ENCODE measurements at regions of chr12 and their contacts with region 1.

Region 1: DNA sequence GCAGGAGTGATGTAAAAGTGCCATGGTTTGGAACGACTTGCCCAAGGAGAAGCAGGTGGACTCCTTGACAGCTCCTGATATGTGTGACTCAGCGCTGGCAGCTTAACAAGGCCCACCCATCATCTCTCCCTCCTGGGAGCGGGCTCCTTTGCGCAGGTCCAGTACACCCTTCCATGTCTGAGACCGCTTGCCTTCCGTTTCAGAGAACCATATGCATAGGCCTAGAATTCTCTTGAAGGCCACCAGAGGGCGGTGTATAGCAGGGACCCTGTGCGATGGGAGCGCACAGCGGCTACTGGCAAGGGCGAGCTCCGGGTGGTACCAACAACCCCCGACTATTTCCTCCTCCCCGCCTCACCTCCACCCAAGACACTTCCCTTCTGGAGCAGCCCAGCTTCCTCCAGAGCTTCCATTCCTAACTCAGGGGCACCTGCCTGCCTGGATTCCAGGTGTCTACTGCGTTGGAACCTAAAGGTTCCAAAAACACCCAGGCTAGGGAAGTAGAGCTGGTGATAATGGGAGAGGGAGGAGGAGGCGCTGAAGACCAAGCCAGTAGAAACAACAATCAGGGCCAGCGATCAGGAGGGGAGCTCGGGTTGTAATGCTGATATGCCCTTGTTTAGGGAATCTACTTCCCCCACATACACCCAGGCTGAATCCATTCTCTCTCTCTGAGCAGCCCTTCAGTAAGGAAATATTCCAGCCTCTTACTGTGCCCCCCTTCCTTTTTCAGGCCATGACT is 6.2 kb downstream of the DHH start:
- DNase-seq: peak; percentile 80
- H3K4me3 Mint-ChIP-seq: peak overlapping the region; percentile 4
- H3K27ac Mint-ChIP-seq: no peak overlapping the region
- H3K4me1 Mint-ChIP-seq: peaks cover 55% of the 10 kb centered on the region
- H3K27me3 Mint-ChIP-seq: peaks cover 44% of the 10 kb centered on the region

Region 2: DNA sequence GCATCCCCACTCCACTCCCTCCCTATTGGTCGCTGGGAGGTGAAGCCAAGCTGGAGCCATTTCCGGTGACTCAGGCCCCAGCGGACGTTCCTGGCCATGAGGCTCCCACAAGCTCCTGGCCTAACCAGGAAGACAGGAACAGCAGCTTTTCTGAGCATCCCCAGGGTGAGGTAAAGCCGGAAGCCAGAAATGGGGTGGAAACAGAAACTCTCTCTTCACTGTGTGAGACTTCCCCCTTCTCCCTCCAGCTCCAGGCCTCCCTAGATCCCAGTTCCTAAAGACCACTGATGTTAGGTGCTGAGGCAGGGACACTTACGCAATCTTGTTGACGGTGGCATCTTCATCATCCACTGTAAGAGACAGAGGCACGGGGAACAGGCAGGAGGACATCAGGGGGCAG is 17.2 kb after region 1 on chr12:
- CTCF ChIA-PET with region 1: interaction called, 28 read pairs
- POLR2A ChIA-PET with region 1: no interaction called
- DNase-seq: no peak
- H3K4me3 Mint-ChIP-seq: no peak overlapping the region
- H3K27ac Mint-ChIP-seq: no peak overlapping the region
- H3K4me1 Mint-ChIP-seq: peaks cover 21% of the 10 kb centered on the region
- H3K27me3 Mint-ChIP-seq: no peaks in the 10 kb centered on the region

Region 3: DNA sequence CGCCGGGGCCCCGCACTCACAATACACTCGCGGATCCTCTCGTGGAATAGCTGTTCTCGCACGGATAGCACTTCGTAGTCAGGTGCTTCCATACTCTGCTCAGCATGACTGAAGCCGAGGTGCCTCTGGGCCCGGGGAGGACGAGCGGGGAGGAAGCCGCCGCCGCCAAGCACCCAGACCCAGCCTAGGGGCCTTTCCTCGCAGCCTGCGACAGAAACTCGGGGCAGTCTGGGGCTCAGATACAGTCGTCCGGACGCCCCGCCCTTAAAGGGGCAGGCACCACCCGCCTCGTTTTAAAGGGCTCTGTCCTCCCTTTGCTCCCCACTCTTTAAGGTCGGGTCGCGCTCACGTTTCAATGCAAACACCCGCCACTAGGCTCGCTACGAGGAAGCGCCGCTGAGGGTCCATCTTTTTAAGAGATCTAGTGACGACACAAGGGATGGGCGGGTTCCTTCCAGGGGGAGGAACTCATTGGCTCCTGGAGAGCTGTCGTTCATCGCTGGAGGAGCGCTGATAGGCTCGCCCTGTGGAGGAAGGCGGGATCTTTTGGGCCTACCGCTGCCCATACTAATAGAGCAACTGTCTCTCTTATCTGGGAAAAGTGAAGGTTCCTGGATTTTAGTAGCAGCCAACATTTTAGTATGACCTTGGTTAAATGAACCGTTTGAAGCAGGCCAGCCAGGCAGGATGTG is 22.2 kb after region 1 on chr12 and contains the start of gene LMBR1L:
- CTCF ChIA-PET with region 1: interaction called, 28 read pairs
- POLR2A ChIA-PET with region 1: no interaction called
- DNase-seq: peak; percentile 99
- H3K4me3 Mint-ChIP-seq: peak within 1 kb of the TSS; percentile 96
- H3K27ac Mint-ChIP-seq: peak within 1 kb of the TSS; percentile 94
- H3K4me1 Mint-ChIP-seq: peaks cover 25% of the 10 kb centered on the region
- H3K27me3 Mint-ChIP-seq: no peaks in the 10 kb centered on the region
- total RNA-seq, gene LMBR1L: 60.3 to 62.3 TPM

Measured in activated CD4-positive, alpha-beta T cell treated with anti-CD3 and anti-CD28 coated beads, Interleukin-2, amount 10 ng/mL, durations not matched to agents 7 days and 5 days (primary cell).